Heart right ventricle (tissue), 16 donors: ENCODE measurements at regions of chr22 and their contacts with region 1.

Region 1: GRCh38 chr22:22959147-22959827 is 71.7 kb downstream of the IGLL5 start:
- DNase-seq: peak; percentile 45 to 81
- ATAC-seq: peak; percentile 52 to 87 (median 77)
- H3K4me3 ChIP-seq: no peak overlapping the region
- H3K27ac ChIP-seq: peak overlapping the region in 7 of 10 donors; percentile 54 to 77 (median 73)
- H3K4me1 ChIP-seq: peaks cover 0 to 21% (median 6%) of the 10 kb centered on the region in 9 donors
- H3K27me3 ChIP-seq: peaks cover 0 to 24% (median 15%) of the 10 kb centered on the region in 7 donors
- CTCF ChIP-seq: peak; percentile 86 to 99 (median 93)

Region 2: DNA sequence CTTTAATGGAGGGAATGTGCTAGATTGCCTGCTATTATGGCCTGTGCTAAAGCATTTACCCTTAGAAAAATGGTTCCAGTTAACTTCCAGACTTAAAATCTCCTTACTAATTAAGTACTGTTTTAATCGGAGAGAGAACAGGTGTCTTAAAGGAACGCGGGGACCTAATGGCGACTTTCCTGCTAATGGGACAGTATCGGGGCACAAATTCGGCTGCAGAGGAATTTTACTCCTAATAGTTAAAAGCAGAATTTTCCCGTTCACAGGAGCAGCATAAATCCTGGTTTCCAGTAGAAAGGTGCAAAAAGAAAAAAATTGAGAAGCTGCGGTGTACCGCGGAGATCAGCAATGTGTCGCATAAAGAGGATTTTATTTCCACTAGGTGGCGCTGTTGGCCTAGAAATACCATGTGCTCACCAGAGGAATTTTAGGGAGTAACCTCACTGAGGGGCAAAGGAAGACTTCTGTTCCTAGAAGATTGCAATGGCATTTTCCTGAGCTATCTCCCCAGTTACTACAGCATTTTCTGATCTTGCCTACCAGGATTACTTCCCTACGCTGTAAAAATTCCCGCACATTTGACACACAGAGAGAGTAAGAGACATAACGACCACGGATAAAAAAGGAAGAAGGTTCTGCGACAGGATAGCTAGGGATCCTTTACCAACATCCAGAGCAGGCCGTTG is 495.3 kb before region 1 on chr22:
- intact Hi-C with region 1: loop called in 9 of 10 experiments (anchors 2 to 10 kb)
- DNase-seq: peak in 1 of 2 donors; percentile 51
- ATAC-seq: peak in 5 of 8 donors; percentile 55 to 68 (median 60)
- H3K4me3 ChIP-seq: no peak overlapping the region
- H3K27ac ChIP-seq: no peak overlapping the region
- H3K4me1 ChIP-seq: no peaks in the 10 kb centered on the region
- H3K27me3 ChIP-seq: peaks cover 0 to 67% (median 50%) of the 10 kb centered on the region in 7 donors
- CTCF ChIP-seq: peak; percentile 61 to 85 (median 72)

Region 3: GRCh38 chr22:22802339-22802970 is 156.8 kb before region 1 on chr22:
- intact Hi-C with region 1: loop called in 2 of 10 experiments (anchors 5 to 10 kb)
- DNase-seq: no peak
- ATAC-seq: no peak
- H3K4me3 ChIP-seq: no peak overlapping the region
- H3K27ac ChIP-seq: no peak overlapping the region
- H3K4me1 ChIP-seq: no peaks in the 10 kb centered on the region
- H3K27me3 ChIP-seq: peaks cover 0 to 61% (median 27%) of the 10 kb centered on the region in 7 donors
- CTCF ChIP-seq: peak in 3 of 9 donors; percentile 40 to 49 (median 44)

Region 4: DNA sequence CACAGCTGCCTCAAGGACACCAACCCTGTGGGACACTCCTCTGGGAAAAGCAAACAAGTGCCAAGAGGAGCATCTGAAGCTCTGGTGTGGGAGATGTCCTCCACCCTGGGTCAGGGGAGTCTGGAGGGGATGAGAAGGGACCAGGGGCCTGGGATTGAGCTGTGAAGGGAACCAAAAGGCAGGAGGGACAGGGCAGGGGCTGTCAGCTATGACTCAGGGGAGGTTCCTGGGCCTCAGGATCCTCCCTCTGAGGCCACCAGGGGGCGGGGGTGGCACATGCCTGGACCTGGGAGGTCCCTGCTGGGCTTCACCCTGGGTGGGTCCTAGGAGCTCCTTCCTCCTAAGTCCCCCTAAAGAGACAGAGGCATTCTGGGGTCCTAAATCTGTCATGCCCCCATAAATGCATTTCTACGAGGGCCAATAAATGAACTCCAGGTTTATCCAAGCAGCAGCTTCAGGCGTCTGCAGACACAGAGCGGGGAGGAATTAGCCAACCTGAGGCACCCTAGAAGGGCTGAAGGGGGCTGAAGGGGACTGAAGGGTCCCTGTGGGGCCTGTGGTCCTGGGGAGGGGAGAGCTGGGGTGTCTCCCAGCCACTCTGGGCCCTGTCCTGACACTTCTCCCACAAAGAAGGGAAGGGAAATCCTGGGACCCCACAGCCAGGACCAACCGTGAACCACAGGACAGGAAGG is 103.5 kb before region 1 on chr22:
- intact Hi-C with region 1: loop called in 3 of 10 experiments (anchors 2 to 10 kb)
- DNase-seq: no peak
- ATAC-seq: peak in 1 of 8 donors; percentile 51
- H3K4me3 ChIP-seq: no peak overlapping the region
- H3K27ac ChIP-seq: no peak overlapping the region
- H3K4me1 ChIP-seq: no peaks in the 10 kb centered on the region
- H3K27me3 ChIP-seq: peaks cover 0 to 66% (median 47%) of the 10 kb centered on the region in 7 donors
- CTCF ChIP-seq: peak in 7 of 9 donors; percentile 10 to 55 (median 19)

Region 5: DNA sequence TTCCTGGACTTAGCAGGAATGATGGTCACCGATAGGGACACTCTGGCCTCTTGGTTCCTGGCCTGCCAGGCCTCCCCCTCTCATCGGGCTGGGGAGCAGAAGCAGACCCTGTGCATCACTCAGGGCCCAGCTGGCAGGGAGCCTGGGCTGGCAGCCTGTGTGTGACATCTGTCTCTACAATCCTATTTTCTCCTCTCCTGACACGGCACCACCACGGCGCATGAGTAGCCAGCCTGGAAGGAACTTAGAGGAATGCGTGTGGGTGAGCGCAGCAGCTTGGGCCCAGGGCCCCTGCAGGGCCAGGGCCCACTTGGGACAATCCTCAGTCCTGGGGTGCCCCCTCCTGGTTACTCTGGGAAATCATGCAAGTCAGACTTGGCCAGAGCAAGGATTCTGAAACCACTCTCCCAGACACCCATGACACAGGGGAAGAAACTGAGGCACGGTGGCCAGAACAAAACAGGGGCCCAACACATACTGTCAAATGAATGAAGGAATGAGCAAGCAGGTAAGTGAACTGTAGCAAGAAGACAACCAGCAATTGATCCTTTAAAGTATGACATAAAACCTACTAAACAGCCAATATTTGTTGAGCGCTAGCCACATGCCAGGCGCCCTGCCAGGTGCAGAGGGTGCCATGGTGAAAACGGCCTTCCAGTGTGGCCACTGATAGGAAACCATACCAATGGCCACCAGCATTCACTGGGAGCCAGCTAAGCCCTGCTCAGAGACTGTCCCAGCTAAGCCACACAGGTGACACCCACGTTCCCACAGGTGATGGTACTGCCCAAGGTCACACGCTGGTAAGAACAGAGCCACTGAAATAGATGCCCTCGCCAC is 169.2 kb after region 1 on chr22:
- intact Hi-C with region 1: loop called (anchors 1 to 2 kb)
- DNase-seq: peak; percentile 57 to 76
- ATAC-seq: peak; percentile 83 to 93 (median 90)
- H3K4me3 ChIP-seq: no peak overlapping the region
- H3K27ac ChIP-seq: no peak overlapping the region
- H3K4me1 ChIP-seq: peaks cover 0 to 11% (median 7%) of the 10 kb centered on the region in 9 donors
- H3K27me3 ChIP-seq: peaks cover 0 to 6% (median 0%) of the 10 kb centered on the region in 7 donors
- CTCF ChIP-seq: peak; percentile 62 to 87 (median 83)

Region 6: GRCh38 chr22:23376256-23376655 is 417.0 kb after region 1 on chr22:
- intact Hi-C with region 1: loop called in 3 of 10 experiments (anchors 5 to 10 kb)
- DNase-seq: no peak
- ATAC-seq: no peak
- H3K4me3 ChIP-seq: no peak overlapping the region
- H3K27ac ChIP-seq: no peak overlapping the region
- H3K4me1 ChIP-seq: no peaks in the 10 kb centered on the region
- H3K27me3 ChIP-seq: peaks cover 0 to 29% (median 7%) of the 10 kb centered on the region in 7 donors
- CTCF ChIP-seq: peak in 3 of 9 donors; percentile 20 to 29 (median 20)